HCT116 (cell line): ENCODE measurements at regions of chr9 and their contacts with region 1.

Region 1: DNA sequence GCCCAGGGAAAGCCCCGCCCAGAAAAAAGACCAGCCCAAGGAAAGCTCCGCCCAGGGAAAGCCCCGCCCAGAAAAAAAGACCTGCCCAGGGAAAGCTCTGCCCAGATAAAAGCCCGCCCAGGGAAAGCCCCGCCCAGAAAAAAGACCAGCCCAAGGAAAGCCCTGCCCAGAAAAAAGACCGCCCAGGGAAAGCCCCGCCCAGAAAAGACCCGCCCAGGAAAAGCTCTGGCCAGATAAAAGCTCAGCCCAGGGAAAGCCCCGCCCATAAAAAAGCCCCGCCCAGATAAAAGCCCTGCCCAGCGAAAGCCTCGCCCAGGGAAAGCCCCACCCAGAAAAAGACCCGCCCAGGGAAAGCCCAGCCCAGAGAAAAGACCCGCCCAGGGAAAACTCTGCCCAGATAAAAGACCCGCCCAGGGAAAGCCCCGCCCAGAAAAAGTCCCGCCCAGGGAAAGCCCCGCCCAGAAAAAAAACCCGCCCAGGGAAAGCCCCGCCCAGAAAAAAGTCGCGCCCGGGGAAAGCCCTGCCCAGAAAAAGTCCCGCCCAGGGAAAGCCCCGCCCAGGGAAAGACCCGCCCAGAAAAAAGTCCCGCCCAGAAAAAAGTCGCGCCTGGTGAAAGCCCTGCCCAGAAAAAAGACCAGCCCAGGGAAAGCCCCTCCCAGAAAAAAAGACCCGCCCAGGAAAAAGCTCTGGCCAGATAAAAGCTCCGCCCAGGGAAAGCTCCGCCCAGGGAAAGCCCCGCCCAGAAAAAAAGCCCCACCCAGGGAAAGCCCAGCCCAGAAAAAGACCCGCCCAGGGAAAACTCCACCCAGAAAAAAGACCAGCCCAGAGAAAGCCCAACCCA is 11.9 kb downstream of the GRIN1 start:
- DNase-seq: peak; percentile 79
- ATAC-seq: peak; percentile 75
- H3K4me3 ChIP-seq: no peak overlapping the region
- H3K27ac ChIP-seq: peak overlapping the region; percentile 47; the same call in 1 of the 2 replicates
- H3K4me1 ChIP-seq: peaks cover 12 to 22% of the 10 kb centered on the region in 2 experiments
- H3K27me3 ChIP-seq: no peaks in the 10 kb centered on the region
- CTCF ChIP-seq: no peak
- POLR2A ChIP-seq: no peak
- RAD21 ChIP-seq: no peak

Region 2: DNA sequence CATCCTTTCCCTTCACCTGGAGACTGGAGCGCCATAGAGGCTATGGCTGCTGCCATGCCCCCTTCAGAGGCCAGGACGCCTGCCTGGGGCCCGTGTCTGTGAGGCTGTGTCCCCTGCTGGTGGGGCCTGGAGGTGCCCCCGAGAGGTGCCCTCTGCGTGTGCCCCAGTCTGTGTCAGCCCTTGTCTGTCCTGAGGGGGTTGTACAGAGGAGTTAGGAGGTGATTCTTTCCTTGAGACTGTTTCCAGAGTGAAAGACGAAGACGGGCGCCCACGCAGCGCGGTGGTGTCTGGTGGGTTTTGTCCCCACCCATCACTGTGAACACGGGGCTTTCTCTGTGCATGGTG is 240.0 kb before region 1 on chr9:
- CTCF ChIA-PET with region 1: no interaction called
- POLR2A ChIA-PET with region 1: no interaction called
- RAD21 ChIA-PET with region 1: no interaction called
- intact Hi-C with region 1: no loop called
- DNase-seq: no peak
- ATAC-seq: peak; percentile 74
- H3K4me3 ChIP-seq: no peak overlapping the region
- H3K27ac ChIP-seq: no peak overlapping the region
- H3K4me1 ChIP-seq: no peaks in the 10 kb centered on the region
- H3K27me3 ChIP-seq: no peaks in the 10 kb centered on the region
- CTCF ChIP-seq: no peak; a peak in 1 of 6 replicates
- POLR2A ChIP-seq: no peak
- RAD21 ChIP-seq: no peak

Region 3: DNA sequence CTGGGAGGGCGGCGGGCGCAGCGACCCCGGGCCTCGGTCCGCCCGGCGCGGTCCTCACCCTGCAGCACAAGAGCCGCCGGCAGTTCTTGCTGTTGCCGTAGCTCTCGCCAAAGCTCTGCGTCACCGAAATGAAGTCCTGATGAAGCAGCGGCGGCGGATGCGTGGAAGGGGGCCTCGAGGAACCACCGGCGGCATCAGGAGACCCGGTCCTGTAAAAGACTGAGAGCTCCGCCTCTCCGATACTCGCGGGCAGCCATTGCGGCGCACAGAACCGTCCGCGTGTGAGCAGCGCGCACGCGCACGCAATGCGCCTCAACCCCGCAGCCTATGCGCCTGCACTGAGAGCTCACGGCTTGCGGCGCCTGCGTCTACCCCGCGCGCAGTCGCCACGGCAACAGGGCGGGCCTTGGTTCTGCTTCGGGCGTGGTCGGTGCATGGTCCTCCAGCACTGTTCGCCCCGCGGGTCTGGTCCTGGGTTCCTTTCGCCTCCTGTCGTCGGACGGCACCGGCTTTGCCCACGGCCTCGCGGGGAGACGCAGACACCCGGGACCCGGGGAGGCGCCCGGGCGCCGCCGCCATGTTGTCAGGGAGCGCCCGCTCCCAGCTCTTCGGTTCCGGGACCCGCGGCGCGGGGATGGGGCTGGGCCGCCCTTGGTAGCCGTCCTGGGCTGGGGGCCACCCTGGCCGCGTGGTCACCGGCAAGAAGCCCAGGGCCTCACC is 21.2 kb before region 1 on chr9:
- CTCF ChIA-PET with region 1: interaction called, 8 read pairs
- POLR2A ChIA-PET with region 1: interaction called, 20 read pairs
- RAD21 ChIA-PET with region 1: interaction called in 1 of 2 experiments, 3 read pairs
- intact Hi-C with region 1: no loop called
- DNase-seq: peak; percentile 81
- ATAC-seq: peak; percentile 97
- H3K4me3 ChIP-seq: peak overlapping the region; percentile 85 to 94
- H3K27ac ChIP-seq: peak overlapping the region; percentile 89
- H3K4me1 ChIP-seq: peaks cover 22 to 37% of the 10 kb centered on the region in 2 experiments
- H3K27me3 ChIP-seq: no peaks in the 10 kb centered on the region
- CTCF ChIP-seq: no peak
- POLR2A ChIP-seq: peak; percentile 67
- RAD21 ChIP-seq: no peak

Region 4: GRCh38 chr9:137162505-137163100 is 11.8 kb after region 1 on chr9:
- CTCF ChIA-PET with region 1: interaction called, 15 read pairs
- POLR2A ChIA-PET with region 1: interaction called, 16 read pairs
- RAD21 ChIA-PET with region 1: interaction called in 1 of 2 experiments, 7 read pairs
- intact Hi-C with region 1: no loop called
- DNase-seq: no peak
- ATAC-seq: peak; percentile 50
- H3K4me3 ChIP-seq: peak overlapping the region; percentile 59 to 70
- H3K27ac ChIP-seq: peak overlapping the region; percentile 82
- H3K4me1 ChIP-seq: peaks cover 8 to 52% of the 10 kb centered on the region in 2 experiments; a peak in 3 of 4 replicates
- H3K27me3 ChIP-seq: no peaks in the 10 kb centered on the region
- CTCF ChIP-seq: no peak; a peak in 1 of 6 replicates
- POLR2A ChIP-seq: no peak
- RAD21 ChIP-seq: no peak

Region 5: DNA sequence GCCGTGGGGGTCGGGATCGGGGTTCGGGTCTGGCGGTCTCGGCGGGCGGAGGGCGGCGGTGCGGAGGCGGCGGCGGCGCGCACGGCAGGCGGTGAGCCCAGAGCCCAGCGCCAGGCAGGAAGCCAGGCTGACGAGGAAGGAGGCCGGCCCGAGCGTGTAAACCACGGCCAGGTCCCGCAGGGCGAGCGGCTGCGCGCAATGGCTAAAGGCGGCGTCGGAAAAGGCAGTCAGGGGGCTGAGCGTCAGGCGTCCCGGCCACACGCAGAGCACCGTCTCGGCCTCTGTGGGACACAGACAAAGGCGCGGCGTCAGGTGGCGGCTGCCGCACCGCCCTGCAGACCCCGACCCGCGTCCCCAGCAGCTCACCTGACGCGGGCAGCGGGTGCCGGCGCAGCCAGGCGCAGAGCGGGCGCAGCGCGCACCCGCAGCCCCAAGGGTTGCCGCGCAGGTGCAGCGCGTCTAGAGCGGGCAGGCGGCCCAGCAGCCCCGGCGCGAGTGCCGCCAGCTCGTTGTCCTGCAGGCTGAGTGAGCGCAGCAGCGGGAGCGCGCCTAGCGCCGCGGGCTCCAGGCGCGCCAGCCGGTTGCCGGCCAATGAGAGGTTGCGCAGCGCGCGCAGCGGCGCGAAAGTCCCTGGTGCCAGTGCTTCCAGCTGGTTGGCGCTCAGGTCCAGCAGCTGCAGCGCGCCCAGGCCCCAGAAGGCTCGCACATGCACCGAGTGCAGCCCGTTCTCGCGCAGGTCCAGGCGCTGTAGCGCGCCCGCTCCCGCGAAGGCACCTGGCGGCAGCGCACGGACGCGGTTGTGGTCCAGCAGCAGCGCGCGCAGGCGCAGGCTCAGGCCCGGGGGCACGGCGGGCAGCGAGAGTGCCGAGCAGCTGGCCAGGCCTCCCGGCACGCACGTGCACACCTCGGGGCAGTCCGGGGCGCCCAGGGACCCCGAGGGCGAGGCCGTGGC is 18.3 kb after region 1 on chr9:
- CTCF ChIA-PET with region 1: interaction called, 5 read pairs
- POLR2A ChIA-PET with region 1: interaction called, 12 read pairs
- RAD21 ChIA-PET with region 1: no interaction called
- intact Hi-C with region 1: no loop called
- DNase-seq: peak; percentile 65
- ATAC-seq: peak; percentile 75
- H3K4me3 ChIP-seq: peak overlapping the region; percentile 41 to 60
- H3K27ac ChIP-seq: peak overlapping the region; percentile 65; the same call in 1 of the 2 replicates
- H3K4me1 ChIP-seq: peaks cover 14 to 40% of the 10 kb centered on the region in 2 experiments
- H3K27me3 ChIP-seq: no peaks in the 10 kb centered on the region
- CTCF ChIP-seq: no peak
- POLR2A ChIP-seq: no peak
- RAD21 ChIP-seq: no peak